ENCODE measurements at regions of chr12 and their contacts with region 1.

Region 1: GRCh38 chr12:110718222-110718908 is 24.3 kb downstream of the PPP1CC start:
- DNase-seq: no peak

Region 2: GRCh38 chr12:110766311-110767154 is 48.2 kb after region 1 on chr12:
- intact Hi-C with region 1: no loop called
- DNase-seq: no peak

Region 3: DNA sequence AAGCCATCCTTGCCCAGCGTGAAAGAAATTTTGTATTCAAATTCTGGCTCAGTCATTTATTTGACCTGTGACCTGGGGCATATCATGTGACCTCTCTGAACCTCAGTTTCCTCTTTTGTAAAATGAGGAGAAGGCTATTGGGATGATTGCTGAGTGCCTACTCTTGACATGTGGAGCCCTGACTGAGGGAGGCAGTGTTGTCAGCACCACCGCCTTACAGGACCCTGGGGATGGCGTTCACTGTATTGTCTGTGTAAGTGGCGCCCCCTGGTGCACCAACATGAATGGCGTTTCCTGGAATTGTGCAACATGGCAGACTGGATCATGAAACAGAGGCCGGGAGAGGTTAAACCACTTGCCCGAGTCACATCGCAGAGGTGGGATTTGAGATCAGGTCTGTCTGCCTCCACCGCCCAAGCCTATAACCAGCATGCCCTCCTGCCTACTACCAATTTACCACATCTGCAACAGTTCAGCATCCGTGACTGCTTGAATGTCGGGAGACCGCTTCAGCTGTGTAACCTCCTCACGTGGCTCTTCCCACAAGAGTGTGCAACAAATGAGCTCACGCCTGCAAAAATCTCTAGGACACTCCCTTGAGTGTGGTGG is 108.3 kb after region 1 on chr12:
- intact Hi-C with region 1: loop called in 1 of 2 experiments (anchors 10 kb)
- DNase-seq: peak; percentile 96

Region 4: DNA sequence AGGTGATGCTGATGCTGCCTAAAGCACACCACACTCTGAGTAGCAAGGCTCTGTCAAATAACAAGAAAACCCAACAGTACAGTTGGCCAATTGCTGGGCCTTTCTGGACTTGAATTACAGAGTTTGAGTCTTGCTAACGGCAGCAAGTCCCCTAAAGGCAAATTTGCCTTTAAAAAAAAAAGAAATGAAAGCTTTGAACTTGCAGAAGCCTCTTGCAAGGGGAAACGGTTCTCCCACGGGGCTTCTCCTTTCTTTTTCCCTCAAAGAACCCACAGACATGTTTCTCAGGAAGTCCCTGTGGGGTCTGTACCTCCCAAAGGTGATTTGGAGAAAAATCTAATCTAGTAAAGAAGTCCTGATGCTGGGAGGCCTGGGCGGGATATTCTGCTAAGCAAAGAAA is 393.3 kb after region 1 on chr12:
- intact Hi-C with region 1: no loop called
- DNase-seq: no peak